Left cardiac atrium (tissue), 4 donors: ENCODE measurements at regions of chr7 and their contacts with region 1.

Region 1: DNA sequence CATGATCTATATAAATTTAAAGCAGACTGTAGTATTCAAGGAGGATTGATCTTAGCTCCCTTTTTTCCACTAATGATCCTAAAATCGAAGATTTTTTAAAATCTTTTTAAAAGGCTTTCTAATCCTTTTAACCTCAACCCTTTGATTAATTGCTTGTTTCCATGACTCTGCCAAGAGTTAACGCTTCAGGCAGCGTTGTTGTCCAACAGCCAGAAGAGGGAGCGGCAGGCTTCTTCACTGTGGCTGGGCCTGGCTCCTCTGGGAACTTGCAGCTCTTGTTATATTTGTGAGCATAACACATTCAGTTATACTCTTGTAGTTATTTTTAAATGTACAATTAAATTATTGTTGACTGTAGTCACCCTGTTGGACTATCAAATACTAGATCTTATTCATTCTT is 26.3 kb downstream of the CRCP start:
- DNase-seq: peak; percentile 74
- ATAC-seq: peak; percentile 63 to 78

Region 2: GRCh38 chr7:66075590-66076461 is 65.1 kb before region 1 on chr7 and contains the start of gene ASL:
- intact Hi-C with region 1: loop called in 1 of 2 experiments (anchors 10 kb)
- DNase-seq: peak; percentile 96
- ATAC-seq: peak; percentile 100
- total RNA-seq, gene ASL: 11.1 to 14.7 TPM

Region 3: GRCh38 chr7:66088861-66089838 is 51.8 kb before region 1 on chr7:
- intact Hi-C with region 1: no loop called
- DNase-seq: no peak
- ATAC-seq: no peak

Region 4: DNA sequence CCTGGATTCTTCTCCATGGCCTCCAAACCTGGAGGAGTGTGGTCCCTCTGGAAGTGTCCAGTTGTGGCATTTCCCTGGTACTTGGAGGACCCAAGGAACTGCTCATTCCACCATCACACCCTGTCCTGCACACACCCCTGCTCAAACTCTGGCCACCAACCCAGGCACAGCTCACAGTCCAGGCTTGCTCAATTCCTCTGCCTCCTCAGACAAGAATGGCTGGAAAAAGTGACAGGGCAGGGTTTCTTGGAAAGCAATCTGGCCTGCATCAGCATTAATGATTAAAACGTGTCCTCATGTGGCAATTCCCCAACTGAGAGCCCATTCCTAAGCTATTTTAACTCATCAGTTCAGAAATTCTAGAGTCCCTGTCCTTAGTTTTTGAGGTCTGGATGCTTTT is 47.0 kb after region 1 on chr7:
- intact Hi-C with region 1: no loop called
- DNase-seq: peak; percentile 47
- ATAC-seq: peak; percentile 67 to 69

Region 5: GRCh38 chr7:66429498-66430163 is 288.7 kb after region 1 on chr7:
- intact Hi-C with region 1: no loop called
- DNase-seq: no peak
- ATAC-seq: no peak

Region 6: DNA sequence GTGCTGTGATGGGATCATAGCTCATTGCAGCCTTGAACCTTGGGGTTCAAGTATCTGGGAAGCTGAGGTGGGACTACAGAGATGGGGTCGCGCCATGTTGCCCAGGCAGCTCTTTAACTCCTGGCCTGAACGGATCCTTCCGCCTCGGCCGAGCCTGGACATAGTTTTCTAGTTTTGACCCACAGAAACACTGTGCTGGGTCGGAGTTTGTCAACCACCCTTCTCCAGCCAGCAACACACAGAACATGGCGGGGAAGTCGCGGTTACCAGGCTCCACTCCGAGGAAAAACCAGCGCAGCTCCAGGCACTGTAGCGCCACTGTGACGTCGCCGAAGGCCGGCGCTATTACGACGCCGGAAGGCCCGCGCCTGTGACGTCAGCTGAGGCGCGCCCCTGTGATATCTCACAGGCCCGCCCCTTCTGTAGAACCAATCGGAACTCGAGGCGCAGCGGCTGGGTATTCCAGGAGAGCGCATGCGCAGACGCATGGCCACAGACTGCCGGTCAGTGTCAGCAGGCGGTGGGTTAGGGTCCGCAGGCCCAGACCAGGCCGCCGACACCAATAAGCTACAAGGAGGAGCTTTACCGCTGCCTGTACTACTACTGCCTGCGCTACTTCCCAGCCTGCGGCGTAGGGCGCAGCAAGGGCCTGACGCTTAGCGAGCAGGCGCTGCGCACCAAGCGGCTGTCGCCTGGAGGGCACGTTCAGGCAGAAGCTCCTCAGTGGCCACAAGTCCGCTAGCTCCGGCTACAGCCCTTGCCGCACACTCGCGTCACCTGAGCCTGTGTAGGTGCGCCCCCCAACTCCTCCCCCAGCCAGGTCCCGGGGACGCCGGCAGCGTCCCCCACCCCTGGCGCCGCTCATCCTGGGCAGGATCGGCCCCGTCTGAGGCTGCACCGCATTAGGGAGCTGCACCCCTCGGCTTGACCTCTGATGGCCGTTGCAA is 352.6 kb after region 1 on chr7:
- intact Hi-C with region 1: loop called in 1 of 2 experiments (anchors 10 kb)
- DNase-seq: peak; percentile 99
- ATAC-seq: peak; percentile 99